AG04450 (cell line): ENCODE measurements at regions of chr19 and their contacts with region 1.

Region 1: GRCh38 chr19:39502640-39503417 is 4.1 kb downstream of the DLL3 start:
- DNase-seq: no peak
- H3K4me3 ChIP-seq: no peak overlapping the region
- H3K27ac ChIP-seq: no peak overlapping the region
- H3K27me3 ChIP-seq: peaks cover 52% of the 10 kb centered on the region
- CTCF ChIP-seq: peak; percentile 47

Region 2: DNA sequence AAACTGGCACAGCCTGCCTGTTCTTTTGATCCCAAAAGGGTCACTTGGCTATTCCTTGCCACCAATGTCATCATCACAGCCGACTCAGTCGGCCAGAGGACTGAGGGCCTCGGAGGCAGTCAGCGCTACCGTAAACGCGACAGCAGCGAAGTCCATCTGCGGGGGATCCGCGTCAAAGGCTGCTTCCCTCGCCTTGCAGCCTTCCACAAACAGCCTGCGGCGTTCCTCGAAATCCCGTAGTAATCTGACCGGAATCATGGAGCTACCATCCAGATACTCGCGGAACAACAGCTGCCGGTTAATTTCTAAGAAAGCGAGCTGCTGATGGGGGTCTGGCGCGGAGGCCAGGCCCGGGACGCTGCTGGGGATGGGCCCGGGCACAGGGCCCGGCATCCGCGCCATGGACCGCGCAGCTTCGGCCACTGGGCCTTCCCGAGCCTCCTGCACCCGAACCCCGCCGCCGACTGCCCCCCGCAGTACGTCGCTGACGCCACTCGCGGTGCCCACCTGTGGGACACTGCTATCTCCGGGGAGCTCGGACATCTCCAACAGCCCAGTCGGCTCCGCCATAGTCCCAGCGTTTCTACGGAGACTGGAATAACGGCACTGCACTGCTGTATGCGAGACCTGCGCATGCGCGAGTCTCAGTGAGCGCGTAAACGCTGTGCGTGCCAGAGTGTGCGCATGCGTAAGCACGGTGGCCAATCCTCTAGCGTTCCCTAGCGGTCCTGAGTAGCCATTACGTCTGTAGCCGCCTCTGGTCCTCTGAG is 29.6 kb after region 1 on chr19 and contains the start of gene EID2B:
- CTCF ChIA-PET with region 1: interaction called, 15 read pairs
- POLR2A ChIA-PET with region 1: no interaction called
- DNase-seq: peak; percentile 95
- H3K4me3 ChIP-seq: peak within 1 kb of the TSS; percentile 95
- H3K27ac ChIP-seq: peak within 1 kb of the TSS; percentile 52
- H3K27me3 ChIP-seq: no peaks in the 10 kb centered on the region
- CTCF ChIP-seq: peak; percentile 98
- polyA plus RNA-seq, gene EID2B: 2.3 and 3.1 TPM in 2 replicates

Region 3: GRCh38 chr19:39539519-39540332 is 36.9 kb after region 1 on chr19 and contains the start of gene EID2:
- CTCF ChIA-PET with region 1: interaction called, 10 read pairs
- POLR2A ChIA-PET with region 1: no interaction called
- DNase-seq: peak; percentile 92
- H3K4me3 ChIP-seq: peak within 1 kb of the TSS; percentile 93
- H3K27ac ChIP-seq: peak within 1 kb of the TSS; percentile 91
- H3K27me3 ChIP-seq: peaks cover 8% of the 10 kb centered on the region
- CTCF ChIP-seq: peak; percentile 78
- polyA plus RNA-seq, gene EID2: 11.3 and 11.5 TPM in 2 replicates

Region 4: DNA sequence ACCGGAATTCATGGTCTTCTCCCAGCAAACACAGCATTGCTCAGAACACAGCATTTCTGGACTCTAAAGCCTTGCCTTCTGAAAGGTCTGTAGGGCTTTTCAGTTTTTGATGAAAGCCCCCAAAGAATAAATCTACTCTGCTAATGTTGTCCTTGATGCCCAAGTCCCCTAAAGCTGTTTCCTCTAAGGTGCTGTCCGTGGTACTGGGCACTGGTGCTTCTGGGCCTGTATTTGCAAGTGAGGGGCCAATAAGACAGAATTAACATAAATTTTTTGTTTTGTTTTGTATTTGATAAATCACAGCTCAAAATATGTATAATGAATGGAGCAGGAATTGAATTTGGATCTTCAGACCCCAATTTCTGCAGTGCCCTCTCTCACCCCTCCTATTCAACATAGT is 87.4 kb after region 1 on chr19:
- CTCF ChIA-PET with region 1: no interaction called
- POLR2A ChIA-PET with region 1: no interaction called
- DNase-seq: no peak
- H3K4me3 ChIP-seq: no peak overlapping the region
- H3K27ac ChIP-seq: no peak overlapping the region
- H3K27me3 ChIP-seq: no peaks in the 10 kb centered on the region
- CTCF ChIP-seq: no peak

Region 5: GRCh38 chr19:39661565-39661964 is 158.7 kb after region 1 on chr19:
- CTCF ChIA-PET with region 1: no interaction called
- POLR2A ChIA-PET with region 1: no interaction called
- DNase-seq: no peak
- H3K4me3 ChIP-seq: no peak overlapping the region
- H3K27ac ChIP-seq: no peak overlapping the region
- H3K27me3 ChIP-seq: no peaks in the 10 kb centered on the region
- CTCF ChIP-seq: no peak